ENCODE measurements at regions of chr2 and their contacts with region 1.

Region 1: GRCh38 chr2:10434886-10435819 is 13.0 kb downstream of the ODC1 start:
- DNase-seq: peak; percentile 99
- H3K4me3 ChIP-seq: no peak overlapping the region; a peak in 1 of 4 replicates
- H3K27ac ChIP-seq: no peak overlapping the region
- H3K4me1 ChIP-seq: peaks cover 0 to 4% of the 10 kb centered on the region in 2 experiments; a peak in 1 of 4 replicates
- H3K27me3 ChIP-seq: no peaks in the 10 kb centered on the region
- CTCF ChIP-seq: peak; percentile 98
- EP300 ChIP-seq: no peak
- RAD21 ChIP-seq: peak; percentile 100

Region 2: GRCh38 chr2:10057231-10058107 is 377.7 kb before region 1 on chr2:
- CTCF ChIA-PET with region 1: interaction called, 14 read pairs
- POLR2A ChIA-PET with region 1: no interaction called
- DNase-seq: peak; percentile 58
- H3K4me3 ChIP-seq: no peak overlapping the region
- H3K27ac ChIP-seq: no peak overlapping the region
- H3K4me1 ChIP-seq: peaks cover 0 to 23% of the 10 kb centered on the region in 2 experiments; a peak in 1 of 4 replicates
- H3K27me3 ChIP-seq: no peaks in the 10 kb centered on the region
- CTCF ChIP-seq: no peak
- EP300 ChIP-seq: no peak
- RAD21 ChIP-seq: no peak

Region 3: GRCh38 chr2:10089565-10090190 is 345.5 kb before region 1 on chr2:
- CTCF ChIA-PET with region 1: interaction called, 13 read pairs
- POLR2A ChIA-PET with region 1: no interaction called
- DNase-seq: no peak
- H3K4me3 ChIP-seq: no peak overlapping the region
- H3K27ac ChIP-seq: no peak overlapping the region
- H3K4me1 ChIP-seq: peaks cover 0 to 12% of the 10 kb centered on the region in 2 experiments; a peak in 1 of 4 replicates
- H3K27me3 ChIP-seq: no peaks in the 10 kb centered on the region; the same call in 1 of the 2 replicates
- CTCF ChIP-seq: no peak
- EP300 ChIP-seq: no peak
- RAD21 ChIP-seq: no peak

Region 4: GRCh38 chr2:10162586-10163497 is 272.3 kb before region 1 on chr2:
- CTCF ChIA-PET with region 1: interaction called, 24 read pairs
- POLR2A ChIA-PET with region 1: interaction called, 3 read pairs
- DNase-seq: peak; percentile 81
- H3K4me3 ChIP-seq: no peak overlapping the region
- H3K27ac ChIP-seq: peak overlapping the region in 1 of 2 experiments; percentile 39; a peak in 1 of 4 replicates
- H3K4me1 ChIP-seq: peaks cover 0 to 47% of the 10 kb centered on the region in 2 experiments; a peak in 1 of 4 replicates
- H3K27me3 ChIP-seq: no peaks in the 10 kb centered on the region
- CTCF ChIP-seq: no peak
- EP300 ChIP-seq: no peak
- RAD21 ChIP-seq: peak; percentile 51

Region 5: DNA sequence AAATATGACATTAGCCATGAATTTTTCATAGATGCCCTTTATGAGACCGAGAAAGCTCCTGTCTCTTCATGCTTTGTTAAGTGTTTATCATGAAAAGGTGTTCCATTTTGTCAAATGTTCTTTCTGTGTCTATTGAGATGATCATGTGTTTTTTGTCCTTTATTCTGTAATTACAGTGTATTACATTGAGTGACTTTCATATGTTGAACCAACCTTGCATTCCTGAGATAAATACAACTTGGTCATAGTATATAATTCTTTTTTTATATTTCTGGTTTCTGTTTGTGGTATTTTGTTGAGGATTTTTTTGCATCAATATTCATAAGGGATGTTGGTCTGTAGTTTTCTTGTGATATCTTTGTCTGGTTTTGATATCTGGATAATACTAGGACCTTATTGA is 185.4 kb before region 1 on chr2:
- CTCF ChIA-PET with region 1: no interaction called
- POLR2A ChIA-PET with region 1: no interaction called
- DNase-seq: no peak
- H3K4me3 ChIP-seq: no peak overlapping the region
- H3K27ac ChIP-seq: no peak overlapping the region
- H3K4me1 ChIP-seq: peaks cover 0 to 11% of the 10 kb centered on the region in 2 experiments; a peak in 1 of 4 replicates
- H3K27me3 ChIP-seq: no peaks in the 10 kb centered on the region
- CTCF ChIP-seq: no peak
- EP300 ChIP-seq: no peak
- RAD21 ChIP-seq: no peak

Region 6: DNA sequence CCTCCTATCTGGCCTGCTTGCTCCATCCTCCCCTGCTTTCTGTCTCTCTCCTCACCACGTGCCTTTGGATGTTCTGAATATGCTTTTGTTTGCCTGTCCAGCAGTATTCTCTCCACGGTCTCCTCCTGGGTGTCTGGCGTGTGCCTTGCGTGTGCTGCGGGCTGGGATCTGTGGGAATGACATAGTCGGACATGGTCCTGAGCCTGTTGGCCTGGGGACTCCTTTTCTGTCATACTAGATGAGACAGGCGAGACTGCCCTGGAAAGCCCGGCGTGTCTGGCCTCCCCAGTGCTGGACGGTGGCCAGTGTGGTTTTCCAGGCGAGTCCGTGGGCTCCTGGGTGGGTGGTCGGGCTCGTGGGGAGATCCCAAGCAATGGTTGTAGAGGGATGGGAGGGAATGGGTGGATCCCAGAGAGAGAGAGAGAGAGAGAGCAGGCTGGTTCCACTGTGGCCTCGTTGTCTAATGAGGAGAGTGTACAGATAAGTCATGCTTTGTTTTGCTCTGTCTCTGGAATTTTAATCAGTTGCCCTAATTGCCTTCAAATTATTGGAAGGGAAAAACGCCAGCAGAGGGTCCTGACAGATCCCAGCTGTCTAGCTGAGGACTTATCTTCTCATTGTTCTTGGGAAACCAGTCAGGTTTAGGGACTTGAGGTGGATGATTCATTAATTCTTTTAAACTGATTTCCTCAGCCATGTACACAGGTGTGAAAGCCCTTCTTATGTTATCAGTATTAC is 74.1 kb before region 1 on chr2:
- CTCF ChIA-PET with region 1: interaction called, 13 read pairs
- POLR2A ChIA-PET with region 1: no interaction called
- DNase-seq: peak; percentile 81
- H3K4me3 ChIP-seq: no peak overlapping the region
- H3K27ac ChIP-seq: peak overlapping the region in 1 of 2 experiments; percentile 69; a peak in 2 of 4 replicates
- H3K4me1 ChIP-seq: peaks cover 10 to 75% of the 10 kb centered on the region in 2 experiments; a peak in 2 of 4 replicates
- H3K27me3 ChIP-seq: no peaks in the 10 kb centered on the region
- CTCF ChIP-seq: no peak
- EP300 ChIP-seq: peak in 1 of 2 experiments; percentile 44; a peak in 1 of 4 replicates
- RAD21 ChIP-seq: no peak

Region 7: DNA sequence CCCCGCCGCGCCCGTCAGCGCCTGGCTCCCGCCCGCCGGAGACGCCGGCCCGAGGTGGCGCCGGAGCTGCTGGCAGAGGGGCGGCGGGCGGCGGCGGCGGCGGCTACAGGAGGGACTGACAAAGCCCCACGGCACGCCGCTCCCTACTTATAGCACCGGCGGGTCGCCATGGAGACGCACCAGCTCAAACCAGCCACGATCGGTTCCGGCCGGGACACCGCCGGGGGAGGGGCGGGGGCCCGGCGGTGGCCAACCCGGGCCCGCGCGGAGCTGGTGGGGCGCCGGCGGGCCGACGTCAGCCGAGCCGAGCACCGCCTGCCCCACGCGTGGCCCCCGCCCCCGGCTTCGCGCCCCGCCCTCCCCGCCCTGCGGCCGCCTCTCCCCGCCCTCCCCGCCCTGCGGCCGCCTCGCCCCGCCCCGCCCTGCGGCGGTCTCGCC is 13.1 kb after region 1 on chr2 and contains the start of gene ODC1:
- CTCF ChIA-PET with region 1: interaction called, 138 read pairs
- POLR2A ChIA-PET with region 1: interaction called, 11 read pairs
- DNase-seq: peak; percentile 99
- H3K4me3 ChIP-seq: peak within 1 kb of the TSS; percentile 76 to 88
- H3K27ac ChIP-seq: peak within 1 kb of the TSS; percentile 68 to 89
- H3K4me1 ChIP-seq: peaks cover 28 to 32% of the 10 kb centered on the region in 2 experiments
- H3K27me3 ChIP-seq: no peaks in the 10 kb centered on the region
- CTCF ChIP-seq: no peak
- EP300 ChIP-seq: peak in 1 of 2 experiments; percentile 18; a peak in 1 of 4 replicates
- RAD21 ChIP-seq: no peak
- polyA plus RNA-seq, gene ODC1: 253 and 273 TPM in 2 replicates